B cell (primary cell): ENCODE measurements at regions of chr9 and their contacts with region 1.

Region 1: DNA sequence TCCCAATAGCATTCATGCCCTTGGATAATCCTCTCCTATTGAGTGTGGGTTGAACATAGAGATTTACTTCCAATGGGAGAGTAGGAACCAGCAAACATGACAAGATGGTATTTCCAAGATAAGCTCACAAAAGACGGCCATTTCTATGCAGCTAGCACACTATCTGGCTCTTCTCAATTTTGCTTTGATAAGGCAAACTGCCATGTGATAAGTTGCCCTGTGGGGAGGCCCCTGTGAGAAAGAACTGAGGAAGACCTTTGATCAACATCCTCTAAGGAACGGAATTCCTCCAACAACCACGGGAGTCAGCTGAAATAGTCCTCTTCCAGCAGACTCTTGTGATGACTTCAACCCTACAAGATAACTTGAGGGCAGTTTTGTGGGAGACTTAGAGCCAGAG is 211.9 kb upstream of the TRPM3 start:
- DNase-seq: no peak
- ATAC-seq: no peak
- H3K4me3 ChIP-seq: no peak overlapping the region
- H3K4me3 Mint-ChIP-seq: no peak overlapping the region
- H3K27ac ChIP-seq: no peak overlapping the region
- H3K27ac Mint-ChIP-seq: no peak overlapping the region
- H3K4me1 ChIP-seq: no peaks in the 10 kb centered on the region
- H3K4me1 Mint-ChIP-seq: no peaks in the 10 kb centered on the region
- H3K27me3 ChIP-seq: peaks cover 0 to 8% (median 0%) of the 10 kb centered on the region in 4 experiments
- H3K27me3 Mint-ChIP-seq: peaks cover 6% of the 10 kb centered on the region
- CTCF ChIP-seq: no peak

Region 2: GRCh38 chr9:71270554-71270953 is 62.8 kb before region 1 on chr9:
- CTCF ChIA-PET with region 1: no interaction called
- POLR2A ChIA-PET with region 1: no interaction called
- intact Hi-C with region 1: no loop called
- DNase-seq: no peak
- ATAC-seq: no peak
- H3K4me3 ChIP-seq: no peak overlapping the region
- H3K4me3 Mint-ChIP-seq: no peak overlapping the region
- H3K27ac ChIP-seq: no peak overlapping the region
- H3K27ac Mint-ChIP-seq: no peak overlapping the region
- H3K4me1 ChIP-seq: no peaks in the 10 kb centered on the region
- H3K4me1 Mint-ChIP-seq: no peaks in the 10 kb centered on the region
- H3K27me3 ChIP-seq: no peaks in the 10 kb centered on the region
- H3K27me3 Mint-ChIP-seq: no peaks in the 10 kb centered on the region
- CTCF ChIP-seq: no peak

Region 3: DNA sequence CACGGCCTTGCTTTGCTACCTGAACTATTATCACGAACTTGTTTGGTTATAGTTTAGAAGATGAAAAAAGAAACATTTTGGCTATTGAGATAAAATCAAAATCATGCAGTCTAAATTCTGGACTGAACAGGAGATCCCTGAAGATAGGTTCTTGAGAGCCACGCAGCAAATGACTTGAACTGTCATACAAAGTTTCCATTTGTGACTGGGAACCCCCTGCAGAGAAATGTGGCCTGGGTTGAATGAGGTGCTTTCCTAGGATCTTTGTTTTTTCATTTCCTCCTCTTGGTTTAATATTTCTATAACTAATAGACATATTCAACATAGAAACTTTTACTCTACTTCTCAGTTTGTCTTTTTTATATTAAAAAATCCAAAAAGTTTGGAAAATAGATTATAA is 27.2 kb before region 1 on chr9:
- CTCF ChIA-PET with region 1: no interaction called
- POLR2A ChIA-PET with region 1: no interaction called
- intact Hi-C with region 1: loop called (anchors 1 kb)
- DNase-seq: no peak
- ATAC-seq: no peak
- H3K4me3 ChIP-seq: no peak overlapping the region
- H3K4me3 Mint-ChIP-seq: no peak overlapping the region
- H3K27ac ChIP-seq: no peak overlapping the region
- H3K27ac Mint-ChIP-seq: no peak overlapping the region
- H3K4me1 ChIP-seq: no peaks in the 10 kb centered on the region
- H3K4me1 Mint-ChIP-seq: no peaks in the 10 kb centered on the region
- H3K27me3 ChIP-seq: no peaks in the 10 kb centered on the region
- H3K27me3 Mint-ChIP-seq: peaks cover 7% of the 10 kb centered on the region
- CTCF ChIP-seq: no peak

Region 4: GRCh38 chr9:71683598-71684235 is 350.4 kb after region 1 on chr9:
- CTCF ChIA-PET with region 1: no interaction called
- POLR2A ChIA-PET with region 1: no interaction called
- intact Hi-C with region 1: no loop called
- DNase-seq: no peak
- ATAC-seq: no peak
- H3K4me3 ChIP-seq: no peak overlapping the region
- H3K4me3 Mint-ChIP-seq: no peak overlapping the region
- H3K27ac ChIP-seq: peak overlapping the region in 1 of 2 donors; percentile 65
- H3K27ac Mint-ChIP-seq: peak overlapping the region; percentile 22
- H3K4me1 ChIP-seq: peaks cover 60 to 64% of the 10 kb centered on the region in 2 donors
- H3K4me1 Mint-ChIP-seq: peaks cover 62% of the 10 kb centered on the region
- H3K27me3 ChIP-seq: no peaks in the 10 kb centered on the region
- H3K27me3 Mint-ChIP-seq: no peaks in the 10 kb centered on the region
- CTCF ChIP-seq: no peak